Mammary epithelial cell (primary cell): ENCODE measurements at regions of chrX and their contacts with region 1.

Region 1: DNA sequence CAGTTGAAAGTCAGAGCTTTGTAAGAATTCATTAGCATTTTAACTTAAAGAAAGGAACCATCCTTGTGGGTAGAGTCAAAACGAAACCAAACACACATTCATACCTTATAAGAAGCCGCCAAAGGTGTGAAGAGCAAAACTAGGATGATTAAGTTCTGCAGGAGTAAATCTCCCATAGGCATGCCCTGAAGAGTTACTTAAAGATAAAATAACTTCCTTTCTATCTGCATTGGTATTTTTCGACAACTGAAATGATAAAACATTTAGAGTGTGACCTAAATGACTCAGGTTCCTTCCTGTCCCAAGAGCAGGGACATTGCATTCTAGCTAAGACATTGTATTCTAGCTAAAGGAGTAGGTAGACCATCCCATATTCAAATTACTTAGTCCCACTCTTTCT is 75.3 kb downstream of the BCOR start:
- DNase-seq: no peak
- H3K4me3 ChIP-seq: no peak overlapping the region
- H3K27ac ChIP-seq: no peak overlapping the region
- H3K4me1 ChIP-seq: no peaks in the 10 kb centered on the region
- H3K27me3 ChIP-seq: no peaks in the 10 kb centered on the region
- CTCF ChIP-seq: no peak

Region 2: DNA sequence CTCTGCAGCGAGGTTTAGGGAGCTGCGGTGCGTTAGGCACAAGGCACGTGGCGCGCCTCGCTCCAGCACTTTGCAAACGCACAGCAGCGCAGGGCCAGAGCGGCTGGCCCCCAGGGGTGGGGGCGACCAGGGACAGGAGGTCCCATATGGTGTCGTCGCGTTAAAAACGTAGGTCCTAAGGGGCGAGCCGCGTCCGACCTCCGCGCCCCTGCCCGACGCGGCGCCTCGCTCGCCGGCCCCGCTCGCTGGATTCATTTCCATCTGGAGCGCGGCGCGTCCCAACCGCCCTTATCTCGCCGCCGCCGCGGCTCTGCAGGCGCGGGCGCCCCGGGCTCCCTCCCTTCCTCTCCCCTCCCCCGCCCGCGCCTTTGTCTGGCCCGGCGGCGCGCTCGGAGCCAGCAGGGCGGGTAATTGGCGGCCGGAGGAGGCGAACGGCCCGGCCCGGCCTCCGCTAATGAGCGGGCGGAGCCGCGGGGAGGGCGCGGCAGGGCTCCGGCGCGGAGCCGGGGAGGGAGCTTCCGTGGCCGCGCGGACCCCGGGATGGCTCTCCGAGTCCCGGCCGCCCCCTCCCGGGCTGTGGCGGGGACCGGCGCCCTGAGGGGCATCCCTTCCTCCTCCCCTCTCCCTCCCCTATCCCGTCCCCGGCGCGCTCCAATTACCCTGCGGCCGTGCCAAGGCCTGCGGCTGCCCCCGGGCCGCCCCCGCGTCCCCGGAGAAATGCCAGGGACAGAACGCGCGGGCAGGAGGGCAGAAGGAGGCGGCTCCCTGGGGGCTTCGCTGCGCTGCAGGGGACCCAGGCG is 333.6 kb before region 1 on chrX:
- CTCF ChIA-PET with region 1: no interaction called
- dilution Hi-C with region 1: no loop called
- in situ Hi-C with region 1: no loop called
- intact Hi-C with region 1: no loop called
- DNase-seq: peak; percentile 35
- H3K4me3 ChIP-seq: peak overlapping the region in 2 of 3 experiments; percentile 23 to 31
- H3K27ac ChIP-seq: no peak overlapping the region
- H3K4me1 ChIP-seq: peaks cover 4% of the 10 kb centered on the region
- H3K27me3 ChIP-seq: peaks cover 7% of the 10 kb centered on the region
- CTCF ChIP-seq: no peak

Region 3: GRCh38 chrX:39972340-39972739 is 50.1 kb before region 1 on chrX:
- CTCF ChIA-PET with region 1: no interaction called
- dilution Hi-C with region 1: loop called (anchors 5 kb)
- in situ Hi-C with region 1: no loop called
- intact Hi-C with region 1: no loop called
- DNase-seq: no peak
- H3K4me3 ChIP-seq: no peak overlapping the region
- H3K27ac ChIP-seq: no peak overlapping the region
- H3K4me1 ChIP-seq: peaks cover 7% of the 10 kb centered on the region
- H3K27me3 ChIP-seq: no peaks in the 10 kb centered on the region
- CTCF ChIP-seq: no peak